Posterior cingulate gyrus (tissue), 11 donors: ENCODE measurements at regions of chr1 and their contacts with region 1.

Region 1: DNA sequence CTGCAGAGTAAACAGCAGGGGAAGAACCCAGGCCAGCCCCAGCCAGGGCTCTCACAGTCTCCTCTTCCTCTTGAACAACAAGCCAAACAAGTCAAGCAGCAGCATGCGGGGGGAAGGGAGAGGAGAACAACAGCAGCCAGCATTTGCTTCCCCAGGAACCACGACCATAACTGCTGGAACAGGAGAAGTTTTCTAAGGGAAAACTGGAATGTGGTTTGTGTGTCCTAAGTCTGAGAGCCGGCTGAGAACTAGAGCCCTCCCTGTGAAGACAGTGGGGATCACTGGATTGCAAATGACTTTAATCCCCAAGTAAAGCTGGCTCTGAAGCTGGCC is 48.2 kb downstream of the COQ8A start:
- DNase-seq: peak in 5 of 10 donors; percentile 16 to 91 (median 78)

Region 2: DNA sequence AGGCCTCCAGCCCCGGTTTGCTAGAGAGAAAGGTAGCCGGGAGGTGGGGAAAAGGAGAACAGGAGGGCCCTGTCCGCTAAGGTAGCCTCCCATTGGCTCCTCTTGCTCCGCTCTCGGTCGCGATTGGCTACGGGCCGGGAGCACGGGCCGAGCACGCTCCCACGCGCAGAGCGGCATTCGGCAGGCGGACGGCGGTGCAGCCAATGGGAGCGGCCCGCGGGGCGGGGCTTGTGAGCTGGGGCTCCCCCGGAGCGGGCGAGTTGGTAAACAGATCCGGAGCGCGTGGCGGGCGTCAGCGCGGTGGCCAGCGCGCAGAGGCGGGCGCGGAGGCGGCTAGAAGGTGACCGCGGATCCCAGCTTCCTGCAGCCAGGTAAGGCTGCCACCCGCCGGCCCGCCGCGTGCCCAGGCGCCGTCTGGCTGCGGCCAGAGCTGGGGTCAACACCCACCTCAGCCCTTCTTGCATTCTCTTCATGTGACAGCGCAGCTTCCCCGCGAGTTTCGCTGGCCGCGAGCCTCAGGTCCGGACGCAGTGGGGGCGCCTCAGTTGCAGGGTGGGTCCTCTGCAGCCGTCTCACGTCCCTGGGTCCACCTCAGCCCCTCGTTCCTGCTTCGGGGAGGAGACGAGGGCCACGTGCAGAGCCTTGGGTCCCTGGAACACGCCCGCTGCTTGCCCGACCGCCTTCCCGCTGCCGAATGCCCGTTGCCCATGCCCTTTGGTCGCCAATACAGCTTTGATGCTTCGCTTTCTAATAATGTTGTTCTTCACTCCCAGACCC is 48.1 kb before region 1 on chr1 and contains the start of gene COQ8A:
- intact Hi-C with region 1: loop called (anchors 5 kb)
- DNase-seq: peak; percentile 99 to 100 (median 100)

Region 3: GRCh38 chr1:227058321-227058751 is 70.0 kb after region 1 on chr1:
- intact Hi-C with region 1: no loop called
- DNase-seq: no peak

Region 4: GRCh38 chr1:227210604-227211003 is 222.3 kb after region 1 on chr1:
- intact Hi-C with region 1: no loop called
- DNase-seq: no peak